ENCODE measurements at regions of chr6 and their contacts with region 1.

Region 1: GRCh38 chr6:54074578-54075195 is 36.6 kb upstream of the MLIP start:
- DNase-seq: no peak
- ATAC-seq: peak; percentile 63 to 74 (median 64)
- H3K4me3 ChIP-seq: peak overlapping the region; percentile 23
- H3K27ac ChIP-seq: peak overlapping the region; percentile 67
- H3K4me1 ChIP-seq: peaks cover 76% of the 10 kb centered on the region
- H3K27me3 ChIP-seq: no peaks in the 10 kb centered on the region
- CTCF ChIP-seq: no peak

Region 2: DNA sequence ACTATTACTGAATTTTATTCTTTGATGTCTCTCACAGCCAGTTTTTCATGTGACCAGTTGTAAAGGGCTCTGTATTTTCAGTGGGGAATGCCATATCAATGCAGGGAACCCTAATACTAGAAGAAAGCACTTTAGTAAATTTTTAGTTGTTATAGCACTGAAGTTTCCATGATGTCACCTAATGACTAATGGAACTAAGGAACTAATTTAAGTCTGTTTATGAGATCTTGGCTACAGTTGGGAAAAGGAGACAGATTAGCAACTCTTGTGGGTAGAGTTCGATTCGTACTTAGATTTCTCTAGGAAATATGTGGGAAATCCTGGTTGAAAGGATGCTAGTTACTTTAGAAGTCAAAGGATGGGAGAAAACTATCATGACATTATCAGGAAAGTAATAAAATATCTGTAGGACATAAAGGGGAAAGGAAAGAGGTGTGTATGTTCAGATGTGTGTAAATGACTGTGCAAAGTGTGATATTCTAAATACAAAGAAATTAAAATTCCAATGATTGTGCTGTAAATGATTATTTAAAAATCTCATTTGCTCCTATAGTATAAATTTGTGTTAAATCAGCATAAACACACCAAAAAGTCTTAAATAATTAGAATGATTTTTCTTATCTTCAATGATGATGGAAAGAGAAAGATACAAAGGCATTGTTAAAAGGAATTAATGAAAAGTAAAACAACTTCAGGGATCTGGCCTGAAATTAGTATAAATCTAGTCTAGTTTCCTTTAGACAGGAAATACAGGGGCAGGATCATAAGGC is 176.5 kb before region 1 on chr6:
- intact Hi-C with region 1: no loop called
- DNase-seq: no peak
- ATAC-seq: no peak
- H3K4me3 ChIP-seq: no peak overlapping the region
- H3K27ac ChIP-seq: no peak overlapping the region
- H3K4me1 ChIP-seq: no peaks in the 10 kb centered on the region
- H3K27me3 ChIP-seq: no peaks in the 10 kb centered on the region
- CTCF ChIP-seq: no peak

Region 3: DNA sequence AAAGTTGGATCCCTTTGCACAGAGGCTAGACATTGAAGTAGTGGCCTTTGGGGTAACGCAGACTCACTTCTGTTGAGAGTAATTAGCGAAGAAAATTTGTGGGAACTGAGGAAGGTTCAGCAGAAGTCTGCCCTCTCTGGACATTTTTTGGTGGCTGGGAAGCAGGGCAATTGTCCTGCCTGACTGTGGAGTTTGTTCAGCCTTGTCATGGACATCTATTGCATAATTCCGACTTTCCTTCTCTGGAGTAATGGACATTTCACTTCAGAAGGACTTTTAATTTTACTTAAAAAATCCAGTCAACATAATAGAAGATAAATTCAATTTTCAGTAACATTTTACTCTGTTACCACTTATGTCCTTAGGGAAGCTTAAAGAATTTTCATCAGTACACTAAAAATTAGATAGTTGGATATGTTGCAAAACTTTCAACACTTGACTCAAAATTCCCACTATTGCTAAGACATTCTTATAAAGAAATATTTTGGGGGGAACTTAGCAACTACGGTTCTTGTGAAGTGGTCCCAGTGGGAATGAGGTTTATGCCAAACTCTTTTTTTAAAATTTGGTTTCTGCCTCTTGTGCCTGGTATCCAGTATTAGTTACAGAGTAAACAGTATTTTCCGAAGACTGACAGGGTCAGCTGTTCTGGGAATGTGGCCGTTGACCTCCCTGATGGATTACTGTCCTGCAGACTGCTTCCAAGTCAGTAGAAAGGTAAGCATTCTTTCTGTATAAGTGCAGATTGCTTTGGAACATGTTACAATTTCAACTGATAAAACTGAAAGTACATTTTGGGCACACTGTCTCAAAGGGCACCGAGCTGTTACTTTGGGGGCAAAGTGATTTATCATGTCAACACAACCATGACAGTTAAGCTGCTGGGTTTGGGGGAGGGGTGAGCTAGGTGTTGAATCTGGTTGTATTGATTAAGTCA is 64.1 kb before region 1 on chr6:
- intact Hi-C with region 1: loop called in 1 of 2 experiments (anchors 10 kb)
- DNase-seq: peak; percentile 40 to 68
- ATAC-seq: peak; percentile 87 to 96 (median 93)
- H3K4me3 ChIP-seq: peak overlapping the region; percentile 57
- H3K27ac ChIP-seq: peak overlapping the region; percentile 92
- H3K4me1 ChIP-seq: peaks cover 45% of the 10 kb centered on the region
- H3K27me3 ChIP-seq: no peaks in the 10 kb centered on the region
- CTCF ChIP-seq: no peak

Measured in psoas muscle (tissue), 8 donors.